ENCODE measurements at regions of chr7 and their contacts with region 1.

Region 1: GRCh38 chr7:152675759-152676636 is at the start of gene XRCC2:
- H3K4me3 Mint-ChIP-seq: peak within 1 kb of the TSS; percentile 91
- H3K27ac Mint-ChIP-seq: peak within 1 kb of the TSS; percentile 78
- H3K4me1 Mint-ChIP-seq: peaks cover 14% of the 10 kb centered on the region
- H3K27me3 Mint-ChIP-seq: no peaks in the 10 kb centered on the region

Region 2: GRCh38 chr7:152436111-152436930 is 239.7 kb before region 1 on chr7:
- intact Hi-C with region 1: loop called (anchors 10 kb)
- H3K4me3 Mint-ChIP-seq: peak overlapping the region; percentile 80
- H3K27ac Mint-ChIP-seq: peak overlapping the region; percentile 89
- H3K4me1 Mint-ChIP-seq: peaks cover 36% of the 10 kb centered on the region
- H3K27me3 Mint-ChIP-seq: no peaks in the 10 kb centered on the region